Aorta (tissue), 5 donors: ENCODE measurements at regions of chr6 and their contacts with region 1.

Region 1: DNA sequence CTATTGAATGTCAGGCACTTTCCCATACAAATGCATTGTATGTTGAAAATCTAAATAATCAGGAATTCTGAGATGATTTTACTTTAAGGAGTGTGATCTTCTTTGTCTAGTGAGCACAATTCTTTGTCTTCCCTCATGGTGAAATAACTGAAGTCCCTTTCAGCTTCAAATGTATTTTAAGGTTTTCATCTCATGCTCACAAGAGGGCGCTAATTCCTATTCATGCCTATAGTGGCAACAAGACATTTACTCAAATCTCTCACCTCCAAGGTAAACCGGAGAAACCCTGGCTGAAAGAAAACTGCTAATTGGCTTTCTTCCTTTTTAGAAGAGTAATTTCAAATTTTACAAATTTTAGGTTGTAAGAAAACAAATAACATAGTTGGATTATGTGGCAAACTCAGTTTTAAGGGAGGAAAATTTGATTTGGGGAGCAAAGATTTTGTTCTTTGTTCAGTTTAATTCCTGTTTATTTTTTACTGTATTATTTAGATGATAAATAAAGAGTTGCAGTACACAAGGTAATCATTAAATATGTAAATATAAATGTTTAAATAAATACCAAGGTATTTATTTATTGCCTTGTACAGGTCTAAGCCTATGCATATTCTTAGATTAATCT is 69.1 kb downstream of the SLC35F1 start:
- DNase-seq: no peak
- ATAC-seq: no peak
- H3K4me3 ChIP-seq: no peak overlapping the region
- H3K27ac ChIP-seq: no peak overlapping the region
- H3K4me1 ChIP-seq: no peaks in the 10 kb centered on the region
- H3K27me3 ChIP-seq: no peaks in the 10 kb centered on the region

Region 2: GRCh38 chr6:117938311-117938995 is 37.7 kb before region 1 on chr6:
- intact Hi-C with region 1: no loop called
- DNase-seq: no peak
- ATAC-seq: no peak
- H3K4me3 ChIP-seq: no peak overlapping the region
- H3K27ac ChIP-seq: no peak overlapping the region
- H3K4me1 ChIP-seq: no peaks in the 10 kb centered on the region
- H3K27me3 ChIP-seq: no peaks in the 10 kb centered on the region

Region 3: DNA sequence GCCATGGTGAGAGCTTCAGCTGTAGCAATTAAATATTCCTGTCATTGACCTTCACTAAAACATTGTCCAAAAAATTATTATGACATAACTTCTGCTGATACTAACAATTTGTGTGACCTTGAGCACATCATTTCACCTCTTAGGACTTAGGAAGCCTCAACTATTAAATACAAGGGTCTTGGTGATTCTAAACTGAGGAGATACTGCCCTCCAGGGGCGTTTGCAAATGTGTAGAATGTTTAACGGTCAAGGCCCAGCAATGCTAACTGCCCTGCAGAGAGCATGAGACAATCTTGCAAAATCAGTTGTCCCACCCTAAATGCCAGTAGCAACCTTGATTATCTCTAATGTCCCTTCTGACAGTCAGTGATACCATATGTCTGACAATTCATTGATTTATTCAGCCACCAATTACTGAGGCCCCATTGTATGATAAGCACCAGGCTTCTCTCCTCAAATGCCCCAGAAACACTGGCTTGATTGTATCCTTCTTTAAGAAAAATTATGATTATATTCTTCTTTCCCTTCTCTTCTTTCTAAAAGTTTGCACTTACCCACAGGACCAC is 287.9 kb after region 1 on chr6:
- intact Hi-C with region 1: loop called (anchors 5 to 10 kb)
- DNase-seq: no peak
- ATAC-seq: no peak
- H3K4me3 ChIP-seq: no peak overlapping the region
- H3K27ac ChIP-seq: no peak overlapping the region
- H3K4me1 ChIP-seq: peaks cover 0 to 1% of the 10 kb centered on the region in 2 donors
- H3K27me3 ChIP-seq: no peaks in the 10 kb centered on the region

Region 4: DNA sequence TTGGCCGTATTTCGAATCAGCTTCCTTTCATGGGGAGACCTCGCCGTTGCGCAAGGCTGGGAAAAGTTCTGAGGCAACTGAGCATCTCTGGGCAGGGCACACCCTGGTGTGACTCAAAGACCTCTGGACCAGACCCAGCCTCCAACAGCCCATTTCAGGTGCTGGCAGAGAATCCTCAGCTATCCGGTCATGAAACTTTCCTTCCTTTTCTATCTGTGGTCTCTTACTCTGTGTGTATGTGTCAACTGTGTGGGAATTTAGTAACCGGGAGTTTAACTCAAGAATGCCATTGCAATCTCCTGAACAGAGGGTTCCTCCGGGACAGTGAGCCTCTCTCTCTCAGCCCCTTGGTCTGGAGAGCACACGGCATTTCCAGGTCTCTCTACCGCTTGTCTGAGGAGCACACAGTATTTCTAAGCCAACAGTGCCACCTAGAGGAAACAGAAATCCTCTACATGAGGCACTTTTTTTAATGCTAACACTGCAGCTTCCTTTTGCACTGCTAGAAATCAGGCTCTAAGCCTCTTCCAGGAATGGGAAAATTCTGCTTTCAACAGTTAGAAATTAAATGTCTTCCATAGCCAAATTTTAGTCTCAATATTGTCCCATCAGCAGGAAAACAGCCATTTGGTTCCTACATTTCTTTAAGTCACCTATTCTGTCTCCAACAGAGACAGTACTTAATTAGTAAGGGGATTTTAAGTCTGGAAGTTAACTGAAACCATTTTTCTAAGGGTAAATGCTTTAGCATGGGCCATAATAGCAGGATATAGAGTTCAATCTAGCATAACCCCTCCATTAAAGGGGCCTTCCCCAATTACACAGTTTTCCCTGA is 604.7 kb after region 1 on chr6:
- intact Hi-C with region 1: loop called (anchors 10 kb)
- DNase-seq: peak in 1 of 2 donors; percentile 69
- ATAC-seq: peak; percentile 93
- H3K4me3 ChIP-seq: no peak overlapping the region
- H3K27ac ChIP-seq: no peak overlapping the region
- H3K4me1 ChIP-seq: no peaks in the 10 kb centered on the region
- H3K27me3 ChIP-seq: no peaks in the 10 kb centered on the region

Region 5: GRCh38 chr6:118618679-118619377 is 642.7 kb after region 1 on chr6:
- intact Hi-C with region 1: loop called in 1 of 2 experiments (anchors 5 kb)
- DNase-seq: peak; percentile 55 to 82
- ATAC-seq: peak; percentile 88
- H3K4me3 ChIP-seq: no peak overlapping the region
- H3K27ac ChIP-seq: no peak overlapping the region
- H3K4me1 ChIP-seq: no peaks in the 10 kb centered on the region
- H3K27me3 ChIP-seq: no peaks in the 10 kb centered on the region

Region 6: GRCh38 chr6:118748311-118749062 is 772.3 kb after region 1 on chr6:
- intact Hi-C with region 1: no loop called
- DNase-seq: peak in 1 of 2 donors; percentile 80
- ATAC-seq: no peak
- H3K4me3 ChIP-seq: no peak overlapping the region
- H3K27ac ChIP-seq: no peak overlapping the region
- H3K4me1 ChIP-seq: no peaks in the 10 kb centered on the region
- H3K27me3 ChIP-seq: no peaks in the 10 kb centered on the region